Activated naive CD8-positive, alpha-beta T cell treated with anti-CD3 and anti-CD28 coated beads, Interleukin-2, amount 10 ng/mL, durations not matched to agents 7 days and 5 days (primary cell): ENCODE measurements at regions of chr3 and their contacts with region 1.

Region 1: DNA sequence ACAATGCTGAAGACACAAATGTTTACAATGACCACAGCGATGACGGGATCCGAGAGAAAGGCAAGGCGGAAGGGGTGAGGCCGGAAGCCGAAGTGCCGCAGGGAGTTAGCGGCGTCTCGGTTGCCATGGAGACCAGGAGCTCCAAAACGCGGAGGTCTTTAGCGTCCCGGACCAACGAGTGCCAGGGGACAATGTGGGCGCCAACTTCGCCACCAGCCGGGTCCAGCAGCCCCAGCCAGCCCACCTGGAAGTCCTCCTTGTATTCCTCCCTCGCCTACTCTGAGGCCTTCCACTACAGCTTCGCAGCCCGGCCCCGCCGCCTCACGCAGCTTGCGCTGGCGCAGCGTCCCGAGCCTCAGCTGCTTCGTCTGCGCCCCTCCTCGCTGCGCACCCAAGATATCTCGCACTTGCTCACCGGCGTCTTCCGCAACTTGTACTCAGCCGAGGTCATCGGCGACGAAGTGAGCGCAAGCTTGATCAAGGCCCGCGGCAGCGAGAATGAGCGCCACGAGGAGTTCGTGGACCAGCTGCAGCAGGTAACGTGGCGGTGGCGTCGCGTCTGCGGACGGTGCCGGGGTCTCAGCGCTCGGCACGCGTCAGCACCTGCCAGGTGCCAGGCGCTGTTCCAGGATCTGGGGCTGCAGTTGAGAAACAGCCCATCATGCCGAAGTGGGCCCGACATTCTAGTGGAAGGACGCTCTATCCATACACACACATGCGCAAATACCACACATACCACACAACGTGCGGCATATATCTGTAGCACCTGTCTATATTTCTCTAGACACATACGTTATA is at the start of gene DLEC1:
- DNase-seq: peak; percentile 83
- ATAC-seq: peak; percentile 70
- H3K4me3 Mint-ChIP-seq: peak within 1 kb of the TSS; percentile 66
- H3K27ac Mint-ChIP-seq: peak within 1 kb of the TSS; percentile 94
- H3K4me1 Mint-ChIP-seq: peaks cover 27% of the 10 kb centered on the region
- H3K27me3 Mint-ChIP-seq: no peaks in the 10 kb centered on the region
- total RNA-seq, gene DLEC1: 3.2 to 3.7 TPM

Region 2: GRCh38 chr3:38054291-38055001 is 15.1 kb after region 1 on chr3:
- POLR2A ChIA-PET with region 1: no interaction called
- DNase-seq: no peak
- ATAC-seq: peak; percentile 50
- H3K4me3 Mint-ChIP-seq: no peak overlapping the region
- H3K27ac Mint-ChIP-seq: peak overlapping the region; percentile 18
- H3K4me1 Mint-ChIP-seq: peaks cover 7% of the 10 kb centered on the region
- H3K27me3 Mint-ChIP-seq: no peaks in the 10 kb centered on the region

Region 3: DNA sequence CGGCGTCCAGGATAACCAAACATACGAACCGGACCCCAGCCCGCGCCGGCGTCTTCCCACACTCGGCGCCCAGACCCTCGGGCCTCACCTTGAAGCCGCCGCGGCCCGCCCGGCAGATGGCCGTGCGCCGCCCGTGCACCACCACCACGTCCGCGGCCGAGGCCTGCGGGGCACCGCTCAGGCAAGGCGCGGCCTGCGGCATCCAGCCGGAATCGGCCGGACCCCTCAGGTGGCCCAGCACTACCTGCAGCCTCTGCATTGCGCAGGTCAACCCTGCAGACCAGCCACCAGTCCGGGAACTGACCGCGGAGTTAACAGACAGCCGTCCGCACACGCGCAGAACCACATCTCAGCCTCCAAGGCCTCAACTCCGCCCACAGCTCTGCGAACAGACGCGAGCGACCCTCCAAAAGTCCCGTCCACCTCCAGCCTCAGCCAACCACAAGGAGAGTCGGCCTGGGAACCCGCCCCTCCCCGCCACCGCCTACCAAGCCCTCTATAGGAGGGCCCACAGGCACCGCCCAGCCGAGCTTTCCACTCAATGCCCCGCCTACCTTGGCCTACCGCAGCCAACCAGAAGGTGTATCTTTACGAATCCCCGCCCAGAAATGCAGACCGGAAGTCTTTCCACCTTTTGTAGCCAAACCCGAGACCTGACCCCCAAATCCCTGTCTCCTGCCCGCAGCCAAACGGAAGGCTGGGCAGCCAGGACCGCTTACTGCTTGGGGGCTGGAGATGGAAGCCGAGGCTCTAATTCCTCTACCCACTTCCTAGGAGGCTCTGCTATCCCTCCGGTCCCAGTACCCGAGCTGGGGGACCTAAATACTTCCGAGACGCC is 97.7 kb after region 1 on chr3 and contains the start of gene ACAA1:
- POLR2A ChIA-PET with region 1: interaction called, 10 read pairs
- DNase-seq: peak; percentile 93
- ATAC-seq: peak; percentile 86
- H3K4me3 Mint-ChIP-seq: peak within 1 kb of the TSS; percentile 86
- H3K27ac Mint-ChIP-seq: peak within 1 kb of the TSS; percentile 100
- H3K4me1 Mint-ChIP-seq: peaks cover 52% of the 10 kb centered on the region
- H3K27me3 Mint-ChIP-seq: no peaks in the 10 kb centered on the region
- total RNA-seq, gene ACAA1: 89.0 to 93.5 TPM